IMR-90 (cell line): ENCODE measurements at regions of chrX and their contacts with region 1.

Region 1: DNA sequence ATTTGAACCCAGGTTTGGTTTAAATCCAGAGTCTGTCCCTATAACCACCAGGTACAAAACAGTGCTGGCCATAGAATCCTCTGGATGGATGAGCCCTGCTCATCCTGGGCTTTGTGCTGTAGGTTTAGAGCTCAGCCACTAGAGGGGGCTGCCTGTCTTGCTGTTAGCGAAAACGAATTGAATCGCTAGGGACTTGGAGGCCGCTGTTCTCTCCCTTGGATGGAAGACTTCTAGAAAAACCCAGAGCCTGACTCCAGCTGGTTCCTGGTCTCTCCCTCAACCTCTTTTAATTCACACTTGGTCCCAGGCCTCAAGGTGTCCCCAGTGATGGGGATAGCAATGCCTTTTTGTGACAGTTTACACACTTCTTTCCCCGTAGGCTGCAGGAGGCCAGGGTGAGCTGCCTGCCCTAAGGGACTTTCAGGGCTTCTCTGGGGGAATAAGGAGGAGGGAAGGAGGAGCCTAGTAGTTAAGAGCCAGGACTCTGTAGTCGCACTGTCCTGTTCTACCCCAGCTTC is 8.7 kb downstream of the RIPPLY1 start:
- DNase-seq: peak; percentile 73
- ATAC-seq: peak; percentile 86
- H3K4me3 ChIP-seq: no peak overlapping the region
- H3K27ac ChIP-seq: no peak overlapping the region
- H3K4me1 ChIP-seq: 0 out of 2 replicates have a peak, but pooled peaks cover 3% of the 10 kb centered on the region
- H3K27me3 ChIP-seq: peaks cover 17% of the 10 kb centered on the region
- CTCF ChIP-seq: peak; percentile 87
- POLR2A ChIP-seq: no peak
- RAD21 ChIP-seq: peak; percentile 89

Region 2: GRCh38 chrX:106484233-106484632 is 410.2 kb before region 1 on chrX:
- CTCF ChIA-PET with region 1: no interaction called
- POLR2A ChIA-PET with region 1: no interaction called
- dilution Hi-C with region 1: no loop called
- in situ Hi-C with region 1: no loop called
- intact Hi-C with region 1: no loop called
- DNase-seq: no peak
- ATAC-seq: no peak
- H3K4me3 ChIP-seq: no peak overlapping the region
- H3K27ac ChIP-seq: no peak overlapping the region
- H3K4me1 ChIP-seq: no peaks in the 10 kb centered on the region
- H3K27me3 ChIP-seq: peaks cover 2% of the 10 kb centered on the region
- CTCF ChIP-seq: no peak
- POLR2A ChIP-seq: no peak
- RAD21 ChIP-seq: no peak

Region 3: GRCh38 chrX:106952988-106953387 is 58.5 kb after region 1 on chrX:
- CTCF ChIA-PET with region 1: interaction called, 3 read pairs
- POLR2A ChIA-PET with region 1: no interaction called
- dilution Hi-C with region 1: no loop called
- in situ Hi-C with region 1: no loop called
- intact Hi-C with region 1: loop called (anchors 1 kb)
- DNase-seq: no peak
- ATAC-seq: peak; percentile 28; the same call in 1 of the 2 replicates
- H3K4me3 ChIP-seq: no peak overlapping the region
- H3K27ac ChIP-seq: no peak overlapping the region
- H3K4me1 ChIP-seq: peaks cover 5% of the 10 kb centered on the region; the same call in 1 of the 2 replicates
- H3K27me3 ChIP-seq: no peaks in the 10 kb centered on the region; the same call in 1 of the 2 replicates
- CTCF ChIP-seq: peak; percentile 43
- POLR2A ChIP-seq: no peak
- RAD21 ChIP-seq: peak; percentile 32

Region 4: GRCh38 chrX:107025545-107025944 is 131.1 kb after region 1 on chrX:
- CTCF ChIA-PET with region 1: no interaction called
- POLR2A ChIA-PET with region 1: no interaction called
- dilution Hi-C with region 1: no loop called
- in situ Hi-C with region 1: no loop called
- intact Hi-C with region 1: loop called (anchors 10 kb)
- DNase-seq: peak; percentile 24
- ATAC-seq: peak; percentile 56; the same call in 1 of the 2 replicates
- H3K4me3 ChIP-seq: no peak overlapping the region
- H3K27ac ChIP-seq: no peak overlapping the region
- H3K4me1 ChIP-seq: no peaks in the 10 kb centered on the region
- H3K27me3 ChIP-seq: peaks cover 3% of the 10 kb centered on the region
- CTCF ChIP-seq: peak; percentile 52
- POLR2A ChIP-seq: no peak
- RAD21 ChIP-seq: peak; percentile 63

Region 5: GRCh38 chrX:107537815-107538214 is 643.4 kb after region 1 on chrX:
- CTCF ChIA-PET with region 1: no interaction called
- POLR2A ChIA-PET with region 1: no interaction called
- dilution Hi-C with region 1: no loop called
- in situ Hi-C with region 1: no loop called
- intact Hi-C with region 1: loop called (anchors 10 kb)
- DNase-seq: peak; percentile 50
- ATAC-seq: peak; percentile 63
- H3K4me3 ChIP-seq: no peak overlapping the region
- H3K27ac ChIP-seq: no peak overlapping the region
- H3K4me1 ChIP-seq: no peaks in the 10 kb centered on the region
- H3K27me3 ChIP-seq: peaks cover 7% of the 10 kb centered on the region
- CTCF ChIP-seq: peak; percentile 59
- POLR2A ChIP-seq: no peak
- RAD21 ChIP-seq: peak; percentile 76

Region 6: DNA sequence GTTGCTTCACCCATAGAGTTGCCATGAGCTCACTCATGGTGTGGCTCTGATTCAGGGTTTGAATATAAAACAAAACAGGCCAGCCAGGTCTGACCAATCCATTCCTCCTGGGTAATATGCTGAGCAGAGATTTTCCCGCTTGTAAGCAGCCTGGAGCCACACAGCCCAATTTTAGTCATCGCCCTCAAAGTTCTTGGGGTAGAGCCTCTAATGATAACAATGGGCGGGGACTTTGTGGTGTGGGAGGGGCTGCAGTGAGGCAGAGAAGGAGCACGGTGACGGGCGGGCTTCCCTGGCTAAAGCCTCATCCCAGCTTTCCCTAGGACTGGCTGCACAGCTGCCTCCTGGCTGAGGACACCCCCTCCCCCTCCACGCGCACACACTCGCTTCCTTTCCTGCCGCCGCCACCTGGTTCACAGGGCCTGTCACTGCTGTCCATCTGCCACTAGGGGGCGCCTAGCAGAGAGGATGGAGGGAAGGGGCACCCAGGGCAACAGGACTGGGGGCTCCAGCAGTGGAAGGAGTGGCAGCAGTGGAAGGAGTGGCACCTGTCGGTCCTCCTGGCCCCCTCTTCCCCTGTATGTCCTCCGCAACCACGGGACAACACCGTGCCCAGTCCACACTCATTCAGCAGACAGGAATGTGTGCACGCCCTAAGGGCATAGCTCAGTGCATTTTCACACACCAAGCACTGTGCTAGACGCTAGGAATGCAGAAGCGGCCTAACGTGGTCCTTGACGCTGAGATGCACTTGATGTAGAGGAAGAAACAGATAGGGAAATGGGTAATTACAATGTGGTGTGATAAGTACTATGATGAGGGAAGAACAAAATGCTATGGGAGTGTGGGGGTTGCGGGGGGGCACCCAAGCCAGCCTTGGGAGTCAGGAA is 760.7 kb after region 1 on chrX:
- CTCF ChIA-PET with region 1: no interaction called
- POLR2A ChIA-PET with region 1: no interaction called
- dilution Hi-C with region 1: no loop called
- in situ Hi-C with region 1: no loop called
- intact Hi-C with region 1: loop called (anchors 10 kb)
- DNase-seq: peak; percentile 92
- ATAC-seq: peak; percentile 90
- H3K4me3 ChIP-seq: no peak overlapping the region
- H3K27ac ChIP-seq: no peak overlapping the region; the same call in 1 of the 2 replicates
- H3K4me1 ChIP-seq: no peaks in the 10 kb centered on the region
- H3K27me3 ChIP-seq: peaks cover 2% of the 10 kb centered on the region
- CTCF ChIP-seq: peak; percentile 54
- POLR2A ChIP-seq: no peak
- RAD21 ChIP-seq: peak; percentile 22; the same call in 1 of the 2 replicates

Region 7: DNA sequence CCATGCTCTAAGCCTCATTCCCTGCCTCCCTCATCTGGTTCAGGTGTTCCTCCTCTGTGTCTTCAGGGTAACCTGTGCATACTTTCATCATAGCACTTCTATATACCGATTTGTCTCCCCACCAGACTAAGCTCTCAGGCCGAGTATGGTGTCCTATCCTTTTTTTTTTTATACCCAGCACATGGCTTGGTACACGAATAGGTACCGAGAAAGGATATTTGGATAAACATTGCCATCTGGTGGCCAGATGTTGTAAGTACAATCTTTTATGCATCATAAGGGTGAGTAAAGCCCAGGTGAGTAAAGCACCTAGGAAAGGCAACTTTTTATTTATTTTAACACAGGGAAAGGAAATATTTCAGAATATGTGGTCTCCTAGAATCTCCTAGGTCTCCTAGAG is 999.6 kb after region 1 on chrX:
- CTCF ChIA-PET with region 1: no interaction called
- POLR2A ChIA-PET with region 1: no interaction called
- dilution Hi-C with region 1: no loop called
- in situ Hi-C with region 1: no loop called
- intact Hi-C with region 1: loop called (anchors 10 kb)
- DNase-seq: peak; percentile 42
- ATAC-seq: 0 out of 2 replicates have a peak, but pooled peaks have one; percentile 37
- H3K4me3 ChIP-seq: no peak overlapping the region
- H3K27ac ChIP-seq: no peak overlapping the region
- H3K4me1 ChIP-seq: no peaks in the 10 kb centered on the region
- H3K27me3 ChIP-seq: peaks cover 5% of the 10 kb centered on the region
- CTCF ChIP-seq: peak; percentile 54
- POLR2A ChIP-seq: no peak
- RAD21 ChIP-seq: peak; percentile 65